ENCODE measurements at regions of chr15 and their contacts with region 1.

Region 1: GRCh38 chr15:66946578-66947164 is 118.7 kb upstream of the SMAD3 start:
- DNase-seq: peak; percentile 86
- CTCF ChIP-seq: peak; percentile 82

Region 2: GRCh38 chr15:67303490-67304363 is 357.1 kb after region 1 on chr15:
- in situ Hi-C with region 1: loop called (anchors 5 kb)
- DNase-seq: peak; percentile 23
- CTCF ChIP-seq: peak; percentile 57

Region 3: DNA sequence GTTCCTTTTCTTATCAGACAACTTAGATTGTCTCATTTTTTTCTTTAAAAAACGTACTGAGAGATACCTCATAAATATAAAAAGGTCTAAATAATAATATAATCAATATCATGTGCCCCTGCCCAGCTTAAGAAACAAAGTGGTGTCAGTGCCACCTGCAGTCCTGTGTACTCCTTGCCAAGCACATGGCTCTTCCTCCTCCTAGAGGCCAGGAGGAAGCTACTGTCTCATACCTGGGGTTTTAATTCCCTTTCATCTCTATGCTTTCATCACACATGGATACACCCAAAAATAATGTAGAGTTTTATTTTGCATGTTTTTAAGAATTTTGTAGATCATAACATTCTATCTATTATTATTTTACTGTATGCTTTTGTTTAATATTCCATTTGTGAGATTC is 475.6 kb after region 1 on chr15:
- in situ Hi-C with region 1: loop called (anchors 10 kb)
- DNase-seq: no peak
- CTCF ChIP-seq: no peak

Region 4: DNA sequence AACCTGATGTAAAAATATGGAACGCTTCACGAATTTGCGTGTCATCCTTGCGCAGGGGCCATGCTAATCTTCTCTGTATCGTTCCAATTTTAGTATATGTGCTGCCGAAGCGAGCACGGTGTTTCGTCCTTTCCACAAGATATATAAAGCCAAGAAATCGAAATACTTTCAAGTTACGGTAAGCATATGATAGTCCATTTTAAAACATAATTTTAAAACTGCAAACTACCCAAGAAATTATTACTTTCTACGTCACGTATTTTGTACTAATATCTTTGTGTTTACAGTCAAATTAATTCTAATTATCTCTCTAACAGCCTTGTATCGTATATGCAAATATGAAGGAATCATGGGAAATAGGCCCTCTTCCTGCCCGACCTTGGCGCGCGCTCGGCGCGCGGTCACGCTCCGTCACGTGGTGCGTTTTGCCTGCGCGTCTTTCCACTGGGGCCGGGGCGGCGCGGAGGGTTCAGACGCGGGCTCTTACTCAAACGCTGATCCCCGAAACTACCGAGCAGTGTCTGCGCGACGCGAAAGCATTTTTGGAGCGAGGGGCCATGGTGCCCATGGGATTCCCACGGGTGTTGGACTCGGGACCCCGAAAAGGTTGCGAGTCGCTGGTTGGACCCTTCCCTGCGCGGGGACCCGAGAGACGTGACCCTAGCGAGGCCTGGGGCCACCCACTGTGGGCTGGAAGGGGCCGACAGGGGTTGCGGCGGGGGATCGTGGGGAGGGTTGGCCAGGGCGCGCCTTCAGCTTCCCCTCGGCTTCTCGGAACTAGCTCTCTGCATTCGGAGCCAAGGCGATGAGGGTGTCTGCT is 893.5 kb after region 1 on chr15 and contains the start of gene RNU6-1:
- in situ Hi-C with region 1: loop called (anchors 25 kb)
- DNase-seq: peak; percentile 94
- CTCF ChIP-seq: no peak

Measured in GM13976 (cell line).